Activated naive CD4-positive, alpha-beta T cell treated with anti-CD3 and anti-CD28 coated beads for 36 hours (primary cell): ENCODE measurements at regions of chr12 and their contacts with region 1.

Region 1: DNA sequence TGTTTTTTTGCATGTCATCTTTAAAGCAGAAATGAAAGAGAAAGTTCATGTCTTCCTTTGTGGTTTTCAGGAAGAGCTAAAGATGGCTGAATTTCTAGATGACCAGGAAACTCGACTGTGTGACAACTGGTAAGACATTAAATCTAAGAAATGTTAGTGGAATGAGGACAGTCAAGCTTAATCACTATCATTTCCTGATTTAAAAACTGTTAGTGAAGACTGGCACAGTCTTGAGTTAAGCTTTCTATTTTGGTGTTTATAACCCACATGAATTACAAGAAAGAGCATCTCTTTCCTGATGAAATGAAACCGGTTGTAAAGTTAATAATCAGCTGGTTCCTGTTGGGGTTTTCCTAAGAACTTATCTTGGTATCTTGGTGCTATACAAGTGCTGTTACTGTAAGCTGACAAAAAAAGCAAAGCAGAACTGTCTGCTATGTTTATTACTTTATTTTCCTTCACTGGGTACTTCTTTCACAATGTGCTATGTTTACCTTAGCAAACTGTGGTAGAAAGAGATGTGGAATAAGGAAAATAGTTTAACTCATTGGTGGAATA is 5.2 kb downstream of the TRAFD1 start:
- DNase-seq: no peak
- H3K4me3 Mint-ChIP-seq: peak overlapping the region; percentile 42
- H3K27ac Mint-ChIP-seq: peak overlapping the region; percentile 88
- H3K4me1 Mint-ChIP-seq: peaks cover 54% of the 10 kb centered on the region
- H3K27me3 Mint-ChIP-seq: no peaks in the 10 kb centered on the region

Region 2: GRCh38 chr12:111993292-111994150 is 137.0 kb before region 1 on chr12:
- CTCF ChIA-PET with region 1: no interaction called
- intact Hi-C with region 1: loop called (anchors 5 kb)
- DNase-seq: peak; percentile 42
- H3K4me3 Mint-ChIP-seq: peak overlapping the region; percentile 72
- H3K27ac Mint-ChIP-seq: peak overlapping the region; percentile 31
- H3K4me1 Mint-ChIP-seq: peaks cover 60% of the 10 kb centered on the region
- H3K27me3 Mint-ChIP-seq: no peaks in the 10 kb centered on the region

Region 3: GRCh38 chr12:112046003-112046402 is 84.5 kb before region 1 on chr12:
- CTCF ChIA-PET with region 1: no interaction called
- intact Hi-C with region 1: no loop called
- DNase-seq: no peak
- H3K4me3 Mint-ChIP-seq: no peak overlapping the region
- H3K27ac Mint-ChIP-seq: no peak overlapping the region
- H3K4me1 Mint-ChIP-seq: no peaks in the 10 kb centered on the region
- H3K27me3 Mint-ChIP-seq: no peaks in the 10 kb centered on the region

Region 4: GRCh38 chr12:112087055-112087850 is 43.3 kb before region 1 on chr12:
- CTCF ChIA-PET with region 1: interaction called, 3 read pairs
- intact Hi-C with region 1: loop called (anchors 1 kb)
- DNase-seq: no peak
- H3K4me3 Mint-ChIP-seq: no peak overlapping the region
- H3K27ac Mint-ChIP-seq: peak overlapping the region; percentile 0
- H3K4me1 Mint-ChIP-seq: peaks cover 30% of the 10 kb centered on the region
- H3K27me3 Mint-ChIP-seq: no peaks in the 10 kb centered on the region

Region 5: GRCh38 chr12:112096667-112097066 is 33.9 kb before region 1 on chr12:
- CTCF ChIA-PET with region 1: interaction called, 5 read pairs
- intact Hi-C with region 1: loop called (anchors 1 kb)
- DNase-seq: peak; percentile 59
- H3K4me3 Mint-ChIP-seq: peak overlapping the region; percentile 1
- H3K27ac Mint-ChIP-seq: peak overlapping the region; percentile 92
- H3K4me1 Mint-ChIP-seq: peaks cover 50% of the 10 kb centered on the region
- H3K27me3 Mint-ChIP-seq: no peaks in the 10 kb centered on the region

Region 6: GRCh38 chr12:112108201-112109079 is 22.1 kb before region 1 on chr12 and contains the start of gene NAA25:
- CTCF ChIA-PET with region 1: interaction called, 6 read pairs
- intact Hi-C with region 1: loop called (anchors 1 kb)
- DNase-seq: peak; percentile 87
- H3K4me3 Mint-ChIP-seq: peak within 1 kb of the TSS; percentile 96
- H3K27ac Mint-ChIP-seq: peak within 1 kb of the TSS; percentile 99
- H3K4me1 Mint-ChIP-seq: peaks cover 64% of the 10 kb centered on the region
- H3K27me3 Mint-ChIP-seq: no peaks in the 10 kb centered on the region
- total RNA-seq, gene NAA25: 52.4 to 55.7 TPM

Region 7: DNA sequence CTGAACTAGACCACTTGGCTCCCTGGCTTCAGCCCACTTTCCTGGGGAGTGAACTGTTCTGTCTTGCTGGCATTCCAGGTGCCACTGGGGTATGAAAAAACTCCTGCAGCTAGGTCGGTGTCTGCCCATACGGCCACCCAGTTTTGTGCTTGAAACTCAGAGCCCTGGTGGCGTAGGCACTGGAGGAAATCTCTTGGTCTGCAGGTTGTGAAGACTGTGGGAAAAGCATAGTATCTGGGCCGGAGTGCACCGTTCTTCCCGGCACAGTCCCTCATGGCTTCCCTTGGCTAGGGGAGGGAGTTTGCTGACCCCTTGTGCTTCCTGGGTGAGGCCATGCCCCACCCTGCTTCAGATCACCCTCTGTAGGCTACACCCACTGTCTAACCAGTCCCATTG is 28.6 kb after region 1 on chr12:
- CTCF ChIA-PET with region 1: no interaction called
- intact Hi-C with region 1: loop called (anchors 2 kb)
- DNase-seq: no peak
- H3K4me3 Mint-ChIP-seq: no peak overlapping the region
- H3K27ac Mint-ChIP-seq: peak overlapping the region; percentile 85
- H3K4me1 Mint-ChIP-seq: peaks cover 18% of the 10 kb centered on the region
- H3K27me3 Mint-ChIP-seq: no peaks in the 10 kb centered on the region